PC-3 (cell line): ENCODE measurements at regions of chr19 and their contacts with region 1.

Region 1: GRCh38 chr19:6223488-6224301 is 56.1 kb downstream of the MLLT1 start:
- DNase-seq: no peak
- ATAC-seq: no peak
- H3K4me3 ChIP-seq: no peak overlapping the region
- H3K27ac ChIP-seq: no peak overlapping the region
- H3K4me1 ChIP-seq: no peaks in the 10 kb centered on the region; the same call in 1 of the 2 replicates
- H3K27me3 ChIP-seq: no peaks in the 10 kb centered on the region
- CTCF ChIP-seq: no peak

Region 2: DNA sequence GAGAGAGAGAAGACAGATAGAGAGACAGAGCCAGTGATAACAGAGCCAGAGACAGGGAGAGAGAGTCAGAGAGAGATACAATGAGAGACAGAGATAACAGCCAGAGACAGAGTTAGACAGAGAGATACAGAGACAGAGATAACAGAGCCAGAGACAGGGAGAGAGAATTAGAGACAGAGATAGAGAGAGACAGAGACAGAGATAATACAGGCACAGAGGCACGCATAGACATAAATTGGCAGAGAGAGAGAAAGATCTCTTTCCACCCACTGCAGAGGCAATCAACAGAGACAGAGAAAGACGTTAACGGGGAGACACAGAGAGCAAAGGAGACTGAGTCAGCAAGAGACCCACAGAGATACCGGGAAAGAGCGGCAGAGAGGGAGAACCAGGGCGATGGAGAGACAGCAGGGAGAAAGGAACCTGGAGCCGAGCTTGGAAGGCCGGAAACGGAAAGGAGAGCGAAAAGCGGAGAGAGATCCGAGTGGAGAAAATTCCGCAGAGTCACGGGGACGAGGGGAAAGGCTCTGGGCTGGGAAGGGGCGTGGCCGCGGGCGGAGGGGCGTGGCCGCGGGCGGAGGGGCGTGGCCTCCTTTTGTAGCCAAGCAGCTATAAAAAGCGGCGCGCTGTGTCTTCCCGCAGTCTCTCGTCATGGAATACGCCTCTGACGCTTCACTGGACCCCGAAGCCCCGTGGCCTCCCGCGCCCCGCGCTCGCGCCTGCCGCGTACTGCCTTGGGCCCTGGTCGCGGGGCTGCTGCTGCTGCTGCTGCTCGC is 306.9 kb after region 1 on chr19 and contains the start of gene TNFSF9:
- CTCF ChIA-PET with region 1: no interaction called
- POLR2A ChIA-PET with region 1: interaction called, 22 read pairs
- intact Hi-C with region 1: no loop called
- DNase-seq: peak; percentile 94
- ATAC-seq: peak; percentile 91
- H3K4me3 ChIP-seq: peak within 1 kb of the TSS; percentile 81
- H3K27ac ChIP-seq: peak within 1 kb of the TSS; percentile 42
- H3K4me1 ChIP-seq: peaks cover 24% of the 10 kb centered on the region
- H3K27me3 ChIP-seq: no peaks in the 10 kb centered on the region
- CTCF ChIP-seq: no peak
- total RNA-seq, gene TNFSF9: 9.6 and 12.5 TPM in 2 replicates